Prostate gland (tissue), 2 donors: ENCODE measurements at regions of chr2 and their contacts with region 1.

Region 1: DNA sequence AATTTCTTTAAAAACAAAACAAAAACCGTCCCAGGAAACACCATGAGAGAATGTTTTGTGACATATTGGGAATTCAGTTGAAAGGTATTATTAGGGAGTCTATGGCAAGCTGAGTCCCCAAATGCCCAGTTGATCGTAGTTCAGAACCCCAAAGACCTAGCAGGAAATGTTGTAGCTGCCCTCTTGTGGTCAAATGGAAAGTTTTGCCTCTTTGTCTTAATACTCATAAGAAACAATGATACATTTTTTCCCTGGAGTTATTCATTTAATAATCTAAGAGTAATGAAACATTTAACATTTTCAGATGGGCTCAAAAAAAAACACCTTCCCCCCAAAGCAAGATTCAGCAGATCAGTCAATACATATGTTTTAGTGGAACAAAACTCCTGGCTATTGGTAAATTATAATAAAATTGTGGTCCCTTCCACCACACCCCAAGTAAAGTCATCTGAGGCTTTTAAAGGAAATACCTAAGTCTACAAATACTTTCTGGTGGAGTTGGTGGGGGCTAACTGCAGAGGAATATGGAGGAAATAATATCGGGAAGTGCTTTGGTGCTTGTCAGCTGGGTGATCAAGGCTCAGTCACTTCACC is 37.8 kb upstream of the EFEMP1 start:
- DNase-seq: peak; percentile 43
- H3K4me3 ChIP-seq: no peak overlapping the region
- H3K27ac ChIP-seq: no peak overlapping the region
- H3K4me1 ChIP-seq: no peaks in the 10 kb centered on the region
- H3K27me3 ChIP-seq: no peaks in the 10 kb centered on the region
- CTCF ChIP-seq: peak; percentile 31 to 66 (median 60)
- POLR2A ChIP-seq: no peak

Region 2: DNA sequence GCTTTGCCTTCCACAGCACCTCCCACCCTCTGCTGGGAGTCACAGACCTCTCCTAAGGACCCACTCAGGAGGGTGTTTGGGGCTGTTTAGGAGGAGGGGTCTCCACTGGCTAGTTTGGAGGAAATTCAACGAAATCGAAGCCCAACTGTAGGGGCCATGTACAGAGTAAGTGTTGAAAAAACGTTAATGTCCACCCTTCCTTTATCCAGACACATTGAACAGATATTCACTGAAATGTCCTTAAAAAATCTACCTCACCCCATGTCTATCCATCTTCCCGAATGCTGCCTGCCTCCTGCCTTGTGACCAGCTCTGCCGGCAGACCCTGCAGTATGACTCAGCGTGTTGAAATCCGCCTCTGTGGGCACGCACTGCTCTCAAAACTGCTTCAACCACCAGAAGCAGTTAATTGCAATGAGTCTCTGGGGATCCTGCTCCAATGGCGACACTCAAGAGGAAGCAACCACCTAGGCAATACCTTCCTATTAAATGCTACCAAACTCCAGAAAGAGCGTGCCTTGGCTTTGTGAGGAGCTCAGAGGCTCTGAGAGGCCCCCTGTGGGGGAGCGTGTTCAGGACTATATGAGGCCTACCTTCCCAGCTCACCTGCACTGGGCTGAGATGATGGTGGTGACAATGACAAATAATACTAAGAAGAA is 849.7 kb before region 1 on chr2:
- intact Hi-C with region 1: no loop called
- DNase-seq: no peak
- H3K4me3 ChIP-seq: no peak overlapping the region
- H3K27ac ChIP-seq: peak overlapping the region in 1 of 2 donors; percentile 52
- H3K4me1 ChIP-seq: no peaks in the 10 kb centered on the region
- H3K27me3 ChIP-seq: no peaks in the 10 kb centered on the region
- CTCF ChIP-seq: no peak
- POLR2A ChIP-seq: no peak

Region 3: GRCh38 chr2:55771612-55772011 is 189.8 kb before region 1 on chr2:
- intact Hi-C with region 1: loop called (anchors 2 kb)
- DNase-seq: no peak
- H3K4me3 ChIP-seq: no peak overlapping the region
- H3K27ac ChIP-seq: no peak overlapping the region
- H3K4me1 ChIP-seq: no peaks in the 10 kb centered on the region
- H3K27me3 ChIP-seq: no peaks in the 10 kb centered on the region
- CTCF ChIP-seq: peak in 3 of 4 experiments; percentile 47 to 73 (median 69)
- POLR2A ChIP-seq: no peak